Dorsolateral prefrontal cortex (tissue), 120 donors: ENCODE measurements at regions of chr6 and their contacts with region 1.

Region 1: GRCh38 chr6:1609648-1610496 is at the start of gene FOXC1:
- DNase-seq: peak in 1 of 10 donors; percentile 26
- H3K4me3 ChIP-seq: peak within 1 kb of the TSS; percentile 11 to 71 (median 50)
- H3K27ac ChIP-seq: peak within 1 kb of the TSS in 55 of 59 donors; percentile 9 to 96 (median 77)
- H3K27me3 ChIP-seq: peaks cover 13 to 99% (median 89%) of the 10 kb centered on the region in 45 donors
- CTCF ChIP-seq: no peak
- total RNA-seq, gene FOXC1: 2.7 to 22.9 (median 6.6) TPM

Region 2: DNA sequence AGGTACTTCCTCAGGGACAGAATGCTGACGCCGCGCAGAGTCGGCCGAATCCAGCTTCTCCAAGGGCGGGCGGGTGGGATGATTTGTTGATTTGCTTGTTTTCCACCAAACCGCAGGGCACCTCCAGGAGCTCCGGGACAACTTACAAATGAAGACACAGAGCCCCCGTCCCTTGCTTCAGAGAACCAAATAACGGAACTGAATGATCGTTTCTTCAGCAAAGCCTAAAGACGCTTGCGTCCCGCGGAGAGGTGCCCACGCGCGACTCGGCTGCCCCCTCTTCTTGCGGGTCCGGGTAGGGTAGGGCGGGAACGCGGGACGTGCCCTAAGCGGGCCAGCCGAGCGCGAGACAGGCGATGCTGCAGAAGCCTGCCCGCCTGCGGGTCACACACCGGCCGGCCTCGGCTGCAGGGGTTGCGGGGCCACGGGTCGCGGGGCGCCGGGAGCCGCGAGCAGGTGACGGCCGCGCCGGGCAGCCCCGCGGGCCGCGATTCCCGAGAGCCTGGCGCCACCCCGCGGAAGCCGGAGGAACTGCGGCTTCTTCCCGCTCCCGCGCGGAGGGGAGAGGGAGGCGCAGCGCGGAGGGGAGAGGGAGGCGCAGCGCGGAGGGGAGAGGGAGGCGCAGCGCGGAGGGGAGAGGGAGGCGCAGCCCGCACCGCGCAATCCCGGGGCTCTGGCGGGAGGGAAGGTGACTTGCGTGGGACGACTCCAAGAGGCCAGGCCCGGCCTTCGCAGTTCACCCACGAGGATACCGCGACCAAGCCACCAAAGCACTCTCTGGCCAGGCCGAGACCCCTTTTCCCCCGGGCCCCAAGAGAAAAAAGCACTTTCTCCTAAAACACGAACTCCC is 228.2 kb before region 1 on chr6:
- intact Hi-C with region 1: no loop called
- DNase-seq: peak in 6 of 10 donors; percentile 29 to 82 (median 52)
- H3K4me3 ChIP-seq: peak overlapping the region in 58 of 59 donors; percentile 11 to 69 (median 54)
- H3K27ac ChIP-seq: peak overlapping the region in 39 of 59 donors; percentile 4 to 86 (median 69)
- H3K27me3 ChIP-seq: peaks cover 14 to 100% (median 99%) of the 10 kb centered on the region in 45 donors
- CTCF ChIP-seq: peak; percentile 60 to 99 (median 90)

Region 3: DNA sequence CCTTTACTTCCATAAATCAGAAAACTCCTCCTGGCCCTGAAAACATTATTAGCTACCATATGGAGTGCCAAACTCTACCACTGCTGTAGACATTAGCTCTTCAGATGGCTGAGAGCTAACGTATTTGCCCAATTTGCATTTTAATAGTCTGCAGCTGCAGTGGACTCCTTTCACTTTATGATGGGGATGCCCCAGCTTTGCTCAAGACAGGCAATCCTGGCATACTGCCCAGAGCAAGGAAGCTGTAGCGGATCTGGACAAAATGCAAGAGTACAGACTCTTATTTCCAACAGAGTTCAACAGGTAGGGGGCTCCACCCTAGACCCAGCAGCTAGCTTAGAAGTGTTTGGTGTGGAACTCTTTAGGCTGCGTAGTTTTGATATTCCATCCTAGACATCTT is 246.5 kb after region 1 on chr6:
- intact Hi-C with region 1: loop called in 1 of 2 experiments (anchors 10 kb)
- DNase-seq: peak in 1 of 10 donors; percentile 44
- H3K4me3 ChIP-seq: peak overlapping the region in 9 of 59 donors; percentile 9 to 31 (median 17)
- H3K27ac ChIP-seq: no peak overlapping the region
- H3K27me3 ChIP-seq: no peaks in the 10 kb centered on the region
- CTCF ChIP-seq: peak in 3 of 56 donors; percentile 3 to 8 (median 8)

Region 4: GRCh38 chr6:2037237-2037926 is 427.5 kb after region 1 on chr6:
- intact Hi-C with region 1: loop called in 1 of 2 experiments (anchors 10 kb)
- DNase-seq: no peak
- H3K4me3 ChIP-seq: no peak overlapping the region
- H3K27ac ChIP-seq: no peak overlapping the region
- H3K27me3 ChIP-seq: peaks cover 0 to 7% (median 0%) of the 10 kb centered on the region in 45 donors
- CTCF ChIP-seq: peak in 31 of 56 donors; percentile 7 to 55 (median 24)

Region 5: GRCh38 chr6:2448820-2449571 is 839.1 kb after region 1 on chr6:
- intact Hi-C with region 1: loop called (anchors 2 to 10 kb)
- DNase-seq: peak in 1 of 10 donors; percentile 19
- H3K4me3 ChIP-seq: peak overlapping the region in 46 of 59 donors; percentile 8 to 60 (median 34)
- H3K27ac ChIP-seq: no peak overlapping the region
- H3K27me3 ChIP-seq: peaks cover 0 to 2% (median 0%) of the 10 kb centered on the region in 45 donors
- CTCF ChIP-seq: peak; percentile 41 to 75 (median 65)

Region 6: GRCh38 chr6:2695454-2696095 is 1085.7 kb after region 1 on chr6:
- intact Hi-C with region 1: loop called in 1 of 2 experiments (anchors 10 kb)
- DNase-seq: no peak
- H3K4me3 ChIP-seq: no peak overlapping the region
- H3K27ac ChIP-seq: no peak overlapping the region
- H3K27me3 ChIP-seq: no peaks in the 10 kb centered on the region
- CTCF ChIP-seq: peak in 55 of 56 donors; percentile 19 to 76 (median 49)